ENCODE measurements at regions of chr13 and their contacts with region 1.

Region 1: GRCh38 chr13:51729866-51730546 is 74.0 kb downstream of the DHRS12 start:
- DNase-seq: peak; percentile 67
- H3K4me3 ChIP-seq: no peak overlapping the region
- H3K27ac ChIP-seq: peak overlapping the region; percentile 41
- H3K4me1 ChIP-seq: peaks cover 71% of the 10 kb centered on the region
- H3K27me3 ChIP-seq: no peaks in the 10 kb centered on the region
- CTCF ChIP-seq: no peak

Region 2: GRCh38 chr13:51452361-51453206 is 277.4 kb before region 1 on chr13 and contains the start of gene INTS6:
- CTCF ChIA-PET with region 1: no interaction called
- POLR2A ChIA-PET with region 1: interaction called, 5 read pairs
- intact Hi-C with region 1: loop called (anchors 5 kb)
- DNase-seq: peak; percentile 100
- H3K4me3 ChIP-seq: peak within 1 kb of the TSS; percentile 95
- H3K27ac ChIP-seq: peak within 1 kb of the TSS; percentile 99
- H3K4me1 ChIP-seq: peaks cover 35% of the 10 kb centered on the region
- H3K27me3 ChIP-seq: no peaks in the 10 kb centered on the region
- CTCF ChIP-seq: no peak
- total RNA-seq, gene INTS6: 86.2 and 90.4 TPM in 2 replicates

Region 3: GRCh38 chr13:51590971-51591627 is 138.9 kb before region 1 on chr13:
- CTCF ChIA-PET with region 1: no interaction called
- POLR2A ChIA-PET with region 1: no interaction called
- intact Hi-C with region 1: loop called (anchors 5 kb)
- DNase-seq: peak; percentile 70
- H3K4me3 ChIP-seq: no peak overlapping the region
- H3K27ac ChIP-seq: peak overlapping the region; percentile 82
- H3K4me1 ChIP-seq: peaks cover 63% of the 10 kb centered on the region
- H3K27me3 ChIP-seq: no peaks in the 10 kb centered on the region
- CTCF ChIP-seq: no peak